ENCODE measurements at regions of chr1 and their contacts with region 1.

Region 1: GRCh38 chr1:38818175-38818976 is 41.2 kb downstream of the RRAGC start:
- DNase-seq: peak; percentile 34
- H3K4me3 Mint-ChIP-seq: no peak overlapping the region
- H3K27ac Mint-ChIP-seq: no peak overlapping the region
- H3K4me1 Mint-ChIP-seq: peaks cover 8% of the 10 kb centered on the region
- H3K27me3 Mint-ChIP-seq: peaks cover 76% of the 10 kb centered on the region

Region 2: GRCh38 chr1:38834937-38835827 is 16.8 kb after region 1 on chr1:
- CTCF ChIA-PET with region 1: interaction called, 16 read pairs
- POLR2A ChIA-PET with region 1: no interaction called
- DNase-seq: peak; percentile 46
- H3K4me3 Mint-ChIP-seq: no peak overlapping the region
- H3K27ac Mint-ChIP-seq: no peak overlapping the region
- H3K4me1 Mint-ChIP-seq: peaks cover 2% of the 10 kb centered on the region
- H3K27me3 Mint-ChIP-seq: peaks cover 17% of the 10 kb centered on the region